ENCODE measurements at regions of chr1 and their contacts with region 1.

Region 1: GRCh38 chr1:40951943-40952743 is 27.4 kb upstream of the CTPS1 start:
- DNase-seq: peak; percentile 59 to 86
- H3K4me3 ChIP-seq: no peak overlapping the region
- H3K27ac ChIP-seq: no peak overlapping the region
- H3K4me1 ChIP-seq: peaks cover 39% of the 10 kb centered on the region
- H3K27me3 ChIP-seq: no peaks in the 10 kb centered on the region
- CTCF ChIP-seq: peak; percentile 96

Region 2: GRCh38 chr1:40531381-40532061 is 420.6 kb before region 1 on chr1 and contains the start of gene ZNF684:
- CTCF ChIA-PET with region 1: no interaction called
- POLR2A ChIA-PET with region 1: no interaction called
- intact Hi-C with region 1: loop called (anchors 5 kb)
- DNase-seq: peak; percentile 89 to 90
- H3K4me3 ChIP-seq: peak within 1 kb of the TSS; percentile 88
- H3K27ac ChIP-seq: peak within 1 kb of the TSS; percentile 41
- H3K4me1 ChIP-seq: peaks cover 13% of the 10 kb centered on the region
- H3K27me3 ChIP-seq: no peaks in the 10 kb centered on the region
- CTCF ChIP-seq: no peak
- total RNA-seq, gene ZNF684: 6.0 and 11.8 TPM in 2 replicates

Region 3: DNA sequence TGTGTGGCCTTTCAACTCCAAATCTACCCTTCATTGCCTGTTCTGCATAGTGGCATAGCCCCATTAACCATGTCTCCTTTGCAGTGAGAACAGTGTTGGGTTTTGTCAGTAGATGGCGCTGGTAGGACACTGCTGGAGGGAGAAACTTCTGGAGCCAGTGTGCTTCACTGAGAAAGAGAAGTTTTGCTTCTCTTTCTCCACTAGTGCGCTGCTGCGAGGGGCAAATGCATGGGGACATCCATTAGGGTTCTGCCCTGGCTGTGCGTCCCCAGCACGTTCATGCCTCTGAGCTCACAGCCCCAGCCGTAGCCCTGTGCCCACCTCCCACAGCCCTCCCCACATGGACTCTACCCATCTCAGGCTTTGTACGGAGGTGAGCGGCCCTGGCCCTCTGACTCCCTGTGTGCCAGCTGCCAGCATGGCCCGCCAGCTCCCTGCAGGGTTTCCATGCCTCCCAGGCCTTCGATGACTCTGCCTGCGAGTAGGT is 339.8 kb before region 1 on chr1:
- CTCF ChIA-PET with region 1: no interaction called
- POLR2A ChIA-PET with region 1: no interaction called
- intact Hi-C with region 1: loop called (anchors 1 kb)
- DNase-seq: peak; percentile 40 to 65
- H3K4me3 ChIP-seq: no peak overlapping the region
- H3K27ac ChIP-seq: no peak overlapping the region
- H3K4me1 ChIP-seq: no peaks in the 10 kb centered on the region
- H3K27me3 ChIP-seq: no peaks in the 10 kb centered on the region
- CTCF ChIP-seq: peak; percentile 86

Region 4: DNA sequence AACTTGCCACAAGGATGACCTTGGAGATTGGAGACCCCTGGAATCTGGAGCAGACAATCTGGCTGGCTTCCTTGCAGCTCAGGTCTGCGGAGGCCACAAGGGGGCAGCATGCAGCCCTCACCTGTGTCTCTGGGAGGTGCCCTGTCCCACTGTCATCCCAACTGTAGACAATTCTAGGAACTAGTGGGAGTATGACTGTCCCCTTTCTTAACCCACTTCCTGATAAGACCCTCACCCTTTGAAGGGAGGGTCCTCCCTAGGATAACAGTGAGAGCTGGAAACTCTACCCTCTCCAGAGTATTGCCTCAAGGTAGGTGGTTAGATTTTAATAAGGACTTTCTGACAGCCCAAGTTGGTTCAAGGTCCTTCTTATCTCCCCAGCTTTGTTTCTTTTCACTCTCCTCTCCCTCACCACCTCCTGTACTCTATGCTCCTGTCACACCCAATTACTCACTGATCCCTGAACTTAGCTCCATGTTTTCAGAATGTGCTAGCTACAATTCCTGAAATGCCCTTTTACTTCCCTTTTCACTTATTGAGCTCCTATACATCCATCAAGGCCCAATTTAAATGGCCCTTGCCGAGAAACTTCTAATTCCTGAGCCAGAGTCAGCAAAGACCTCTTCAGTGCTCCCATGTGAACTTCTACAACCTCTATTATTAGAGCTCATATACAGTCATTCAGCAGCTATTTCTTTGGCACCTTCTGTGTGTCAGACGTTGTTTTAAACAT is 177.7 kb before region 1 on chr1:
- CTCF ChIA-PET with region 1: interaction called, 11 read pairs
- POLR2A ChIA-PET with region 1: interaction called, 4 read pairs
- intact Hi-C with region 1: loop called (anchors 1 kb)
- DNase-seq: peak; percentile 38 to 68
- H3K4me3 ChIP-seq: no peak overlapping the region
- H3K27ac ChIP-seq: no peak overlapping the region
- H3K4me1 ChIP-seq: no peaks in the 10 kb centered on the region
- H3K27me3 ChIP-seq: no peaks in the 10 kb centered on the region
- CTCF ChIP-seq: peak; percentile 87

Region 5: DNA sequence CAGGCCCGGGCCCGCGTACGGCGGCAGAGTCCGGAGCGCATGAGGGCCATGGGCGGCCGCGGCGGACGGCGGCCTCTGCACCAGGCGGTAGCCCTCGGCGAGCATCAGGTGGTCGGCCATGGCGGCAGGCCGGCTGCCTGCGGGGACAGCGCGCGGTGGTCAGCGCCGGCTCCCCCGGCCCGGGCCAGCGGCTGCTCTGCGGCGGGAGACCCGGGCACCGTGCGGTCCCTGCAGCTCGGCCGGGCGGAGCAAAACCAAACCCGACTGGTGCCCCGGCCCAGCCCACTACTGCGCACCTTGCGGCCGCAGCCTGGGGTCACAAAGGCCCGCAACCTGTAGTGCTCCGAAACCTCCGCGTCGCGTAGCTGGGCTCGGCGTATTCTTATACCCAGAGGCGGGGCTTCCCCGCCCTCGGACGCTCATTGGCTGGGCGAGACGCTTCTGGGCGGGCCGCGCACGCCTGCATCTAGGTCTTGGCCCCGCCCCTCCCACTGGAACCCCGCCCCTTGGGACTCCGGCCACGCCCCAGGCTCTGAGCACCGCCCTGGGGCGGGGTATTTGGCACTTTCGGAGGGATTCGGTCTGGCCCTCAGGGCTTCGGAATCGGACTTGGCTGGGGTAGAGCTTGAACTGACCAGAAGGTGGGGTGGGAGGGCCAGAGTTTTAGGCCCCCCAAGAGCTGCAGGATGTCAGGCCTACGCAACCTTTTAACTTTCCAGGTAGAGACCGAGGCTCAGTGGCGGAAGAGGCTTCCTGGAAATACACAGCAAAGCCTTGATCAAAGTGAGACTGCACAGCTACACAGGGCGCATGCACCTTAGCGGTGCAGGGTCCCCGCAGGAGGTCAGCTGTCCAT is 89.9 kb before region 1 on chr1 and contains the start of gene CITED4:
- CTCF ChIA-PET with region 1: interaction called, 31 read pairs
- POLR2A ChIA-PET with region 1: interaction called, 18 read pairs
- intact Hi-C with region 1: loop called (anchors 1 kb)
- DNase-seq: peak; percentile 87 to 99
- H3K4me3 ChIP-seq: peak within 1 kb of the TSS; percentile 89
- H3K27ac ChIP-seq: peak within 1 kb of the TSS; percentile 52
- H3K4me1 ChIP-seq: peaks cover 60% of the 10 kb centered on the region
- H3K27me3 ChIP-seq: no peaks in the 10 kb centered on the region
- CTCF ChIP-seq: peak; percentile 49
- total RNA-seq, gene CITED4: 67.5 and 98.2 TPM in 2 replicates

Region 6: DNA sequence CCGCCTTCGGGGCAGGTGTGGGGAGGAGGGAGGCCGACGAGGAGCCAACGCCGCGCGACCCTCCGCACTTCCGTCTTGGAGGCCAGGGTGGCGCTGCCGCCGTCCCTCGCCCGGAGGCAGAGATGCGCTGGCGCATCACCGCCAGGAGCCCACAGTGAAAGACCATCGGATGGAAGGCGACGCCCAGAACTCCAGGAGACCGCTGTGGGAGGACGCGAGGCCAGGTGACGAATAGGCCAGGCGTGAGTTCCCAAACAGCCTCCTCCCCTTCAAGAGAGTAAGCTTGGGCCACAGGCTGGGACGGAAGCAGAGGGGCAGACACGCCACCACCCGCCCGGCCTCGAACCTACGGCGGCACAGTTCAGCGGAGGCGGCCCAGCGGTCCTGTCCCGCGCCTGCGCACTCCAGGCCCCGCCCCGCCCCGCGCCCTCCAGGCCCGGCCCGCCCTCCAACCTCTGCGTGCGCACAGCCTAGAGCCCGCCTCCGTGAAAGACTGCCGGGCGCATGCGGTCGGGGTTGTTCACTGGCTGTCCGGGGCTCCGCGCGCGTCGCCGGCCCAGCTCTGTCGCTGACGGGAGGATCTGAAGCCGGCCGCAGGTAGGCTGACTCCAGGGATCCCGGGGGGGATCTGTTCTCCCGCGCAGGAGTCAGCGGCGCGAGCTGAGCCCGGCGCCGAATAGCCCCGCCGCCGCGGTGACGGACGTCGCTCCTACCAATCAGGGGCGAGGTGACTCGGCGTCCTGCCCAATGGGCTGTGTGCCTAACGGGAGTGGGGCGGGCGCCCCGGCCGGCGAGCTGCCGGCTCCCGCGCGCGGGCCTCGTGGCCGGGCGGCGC is 27.3 kb after region 1 on chr1 and contains the start of gene CTPS1:
- CTCF ChIA-PET with region 1: interaction called, 3 read pairs
- POLR2A ChIA-PET with region 1: no interaction called
- intact Hi-C with region 1: loop called (anchors 1 kb)
- DNase-seq: peak; percentile 82 to 97
- H3K4me3 ChIP-seq: peak within 1 kb of the TSS; percentile 92
- H3K27ac ChIP-seq: peak within 1 kb of the TSS; percentile 84
- H3K4me1 ChIP-seq: peaks cover 22% of the 10 kb centered on the region
- H3K27me3 ChIP-seq: no peaks in the 10 kb centered on the region
- CTCF ChIP-seq: no peak
- total RNA-seq, gene CTPS1: 80.5 and 91.9 TPM in 2 replicates